Activated B cell treated with CpG ODN at 0.5 μM for 24 hours (primary cell): ENCODE measurements at regions of chr6 and their contacts with region 1.

Region 1: DNA sequence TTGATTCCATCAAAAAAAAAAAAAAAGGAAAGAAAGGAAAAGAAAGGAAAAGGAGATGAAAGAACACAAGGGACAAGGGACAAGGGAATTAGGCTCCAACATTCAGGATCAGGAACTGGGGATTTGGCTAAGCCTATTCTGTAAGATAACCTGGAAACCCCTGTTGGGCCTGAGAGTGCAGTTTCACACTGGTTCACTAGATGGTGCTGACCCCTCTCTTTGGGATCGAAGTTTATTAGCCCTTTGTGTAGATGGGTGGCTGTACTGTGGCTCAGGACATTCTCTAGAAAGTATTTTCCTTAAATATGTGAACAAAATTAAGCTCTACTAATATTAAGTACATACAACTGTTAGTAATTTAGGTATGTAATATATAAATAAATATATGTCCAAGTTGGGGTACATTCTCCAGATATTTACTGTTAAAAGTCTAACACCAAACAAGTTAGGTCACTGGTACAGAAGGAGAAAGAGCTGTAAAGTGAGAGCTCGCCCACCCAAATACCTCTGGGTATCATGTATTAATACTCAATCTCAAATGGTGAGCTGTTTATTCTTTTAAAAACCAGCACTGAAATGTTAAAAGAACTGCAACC is 6.3 kb downstream of the OR2A4 start:
- DNase-seq: no peak
- ATAC-seq: peak; percentile 97
- H3K4me3 Mint-ChIP-seq: no peak overlapping the region
- H3K27ac Mint-ChIP-seq: no peak overlapping the region
- H3K4me1 Mint-ChIP-seq: peaks cover 23% of the 10 kb centered on the region
- H3K27me3 Mint-ChIP-seq: no peaks in the 10 kb centered on the region
- CTCF ChIP-seq: no peak

Region 2: GRCh38 chr6:131451321-131452144 is 243.4 kb before region 1 on chr6:
- CTCF ChIA-PET with region 1: no interaction called
- POLR2A ChIA-PET with region 1: no interaction called
- intact Hi-C with region 1: no loop called
- DNase-seq: no peak
- ATAC-seq: no peak
- H3K4me3 Mint-ChIP-seq: no peak overlapping the region
- H3K27ac Mint-ChIP-seq: no peak overlapping the region
- H3K4me1 Mint-ChIP-seq: no peaks in the 10 kb centered on the region
- H3K27me3 Mint-ChIP-seq: no peaks in the 10 kb centered on the region
- CTCF ChIP-seq: no peak

Region 3: DNA sequence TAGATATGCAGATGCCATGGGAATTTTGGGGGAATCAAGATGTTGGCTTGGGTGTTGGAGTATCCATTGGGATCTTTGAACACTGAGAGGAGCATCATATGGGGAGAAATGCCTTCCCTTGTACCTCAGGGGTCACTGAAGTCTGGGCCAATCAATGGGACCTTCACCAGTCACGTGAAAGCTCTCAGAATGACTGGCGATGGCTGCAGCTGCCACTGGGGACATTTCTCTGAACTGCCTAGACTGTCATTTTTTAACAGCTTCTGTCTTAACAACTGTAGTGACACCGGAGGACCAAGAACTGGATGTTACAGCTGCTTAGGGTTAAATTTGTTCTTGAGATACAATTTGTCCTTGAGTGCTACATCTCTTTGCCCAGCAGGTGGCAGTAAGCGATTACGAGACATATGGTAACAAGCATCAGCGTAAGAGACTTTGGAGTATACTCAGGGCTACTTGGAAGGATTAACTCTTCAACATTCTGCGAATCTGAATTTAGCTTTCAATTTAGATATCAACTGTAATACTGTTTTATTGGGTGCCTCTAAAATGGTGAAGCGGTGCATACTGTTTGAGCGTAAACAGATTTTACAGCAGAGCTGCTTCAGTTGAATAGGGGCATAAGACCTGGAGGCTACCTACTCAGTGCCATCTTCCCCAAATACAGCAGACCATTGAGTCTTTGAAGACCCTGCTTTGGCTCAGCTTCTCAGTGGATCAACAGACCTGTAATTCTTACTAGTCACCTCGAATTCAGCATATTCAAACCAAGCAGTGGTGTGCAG is 220.2 kb after region 1 on chr6:
- CTCF ChIA-PET with region 1: interaction called, 102 read pairs
- POLR2A ChIA-PET with region 1: interaction called, 7 read pairs
- intact Hi-C with region 1: loop called (anchors 1 kb)
- DNase-seq: no peak
- ATAC-seq: peak; percentile 75
- H3K4me3 Mint-ChIP-seq: no peak overlapping the region
- H3K27ac Mint-ChIP-seq: no peak overlapping the region
- H3K4me1 Mint-ChIP-seq: peaks cover 26% of the 10 kb centered on the region
- H3K27me3 Mint-ChIP-seq: peaks cover 30% of the 10 kb centered on the region
- CTCF ChIP-seq: peak; percentile 29

Region 4: DNA sequence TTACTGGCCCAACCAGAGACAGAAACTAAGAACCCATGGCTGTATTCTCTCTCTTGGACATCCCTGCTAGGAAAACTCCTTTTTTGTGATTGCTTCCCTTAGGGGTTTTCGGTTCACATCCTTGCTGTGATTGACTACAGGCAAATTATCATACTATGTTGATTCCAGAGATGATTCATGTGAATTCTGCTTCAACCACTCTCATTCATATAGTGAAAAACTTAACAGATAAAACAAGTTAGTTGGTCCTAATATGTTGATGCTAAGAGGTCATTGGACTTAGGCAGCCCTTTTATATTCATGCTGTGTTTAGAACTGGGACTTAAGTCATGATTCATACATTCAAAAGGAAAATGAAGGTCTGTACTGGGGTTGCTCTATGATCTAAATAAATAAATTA is 333.1 kb after region 1 on chr6:
- CTCF ChIA-PET with region 1: no interaction called
- POLR2A ChIA-PET with region 1: no interaction called
- intact Hi-C with region 1: no loop called
- DNase-seq: no peak
- ATAC-seq: no peak
- H3K4me3 Mint-ChIP-seq: no peak overlapping the region
- H3K27ac Mint-ChIP-seq: no peak overlapping the region
- H3K4me1 Mint-ChIP-seq: no peaks in the 10 kb centered on the region
- H3K27me3 Mint-ChIP-seq: no peaks in the 10 kb centered on the region
- CTCF ChIP-seq: no peak